Activated CD4-positive, alpha-beta memory T cell treated with anti-CD3 and anti-CD28 coated beads for 36 hours (primary cell): ENCODE measurements at regions of chrX and their contacts with region 1.

Region 1: DNA sequence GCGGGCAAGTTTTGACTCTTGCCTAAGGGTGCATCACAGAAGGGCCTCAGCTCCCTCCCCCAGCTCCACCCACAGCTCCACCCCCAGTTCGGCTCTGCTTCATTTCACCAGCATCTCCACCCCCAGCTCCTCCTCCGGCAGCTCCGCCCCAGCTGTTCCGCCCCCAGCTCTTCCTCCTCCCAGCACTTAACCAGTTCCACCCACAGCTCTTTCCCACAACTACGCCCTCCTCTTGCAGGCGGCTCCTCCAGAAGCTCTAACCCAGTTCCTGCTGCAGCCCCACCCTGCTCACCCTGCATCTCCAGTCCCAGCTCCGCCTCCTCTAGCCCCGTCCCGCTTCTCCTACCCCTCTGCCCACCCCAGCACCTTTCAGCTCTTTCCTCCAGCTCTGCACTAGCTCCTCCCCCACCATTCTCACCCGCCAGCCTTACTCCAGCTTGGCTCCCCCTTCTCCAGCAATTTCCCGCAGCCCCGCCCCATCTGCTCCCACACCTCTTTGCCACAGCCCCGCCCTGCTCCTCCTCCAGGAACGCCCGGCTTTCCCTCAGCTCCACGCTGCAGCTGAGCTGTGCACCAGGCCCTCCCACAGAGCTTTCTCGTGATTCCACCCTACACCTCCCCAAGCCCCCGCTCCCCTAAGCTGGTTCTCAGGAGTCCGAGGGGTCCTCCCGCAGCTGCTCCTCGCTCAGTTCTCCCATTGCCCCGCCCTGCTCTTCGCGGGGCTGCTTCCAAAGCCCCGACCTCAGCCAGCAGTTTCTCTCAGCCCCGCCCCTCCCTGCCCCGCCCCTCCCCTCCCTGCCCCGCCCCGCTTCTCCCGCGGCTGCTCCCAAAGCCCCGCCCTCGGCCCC is 1.3 kb upstream of the EOLA1 start:
- DNase-seq: peak; percentile 93
- H3K4me3 Mint-ChIP-seq: peak overlapping the region; percentile 80
- H3K27ac Mint-ChIP-seq: peak overlapping the region; percentile 85
- H3K4me1 Mint-ChIP-seq: peaks cover 3% of the 10 kb centered on the region
- H3K27me3 Mint-ChIP-seq: no peaks in the 10 kb centered on the region

Region 2: GRCh38 chrX:149504915-149505651 is 34.4 kb before region 1 on chrX and contains the start of gene IDS:
- CTCF ChIA-PET with region 1: interaction called, 16 read pairs
- POLR2A ChIA-PET with region 1: interaction called, 31 read pairs
- intact Hi-C with region 1: loop called (anchors 1 kb)
- DNase-seq: peak; percentile 93
- H3K4me3 Mint-ChIP-seq: peak within 1 kb of the TSS; percentile 97
- H3K27ac Mint-ChIP-seq: peak within 1 kb of the TSS; percentile 99
- H3K4me1 Mint-ChIP-seq: peaks cover 25% of the 10 kb centered on the region
- H3K27me3 Mint-ChIP-seq: no peaks in the 10 kb centered on the region
- total RNA-seq, gene IDS: 71.6 to 72.2 TPM

Region 3: DNA sequence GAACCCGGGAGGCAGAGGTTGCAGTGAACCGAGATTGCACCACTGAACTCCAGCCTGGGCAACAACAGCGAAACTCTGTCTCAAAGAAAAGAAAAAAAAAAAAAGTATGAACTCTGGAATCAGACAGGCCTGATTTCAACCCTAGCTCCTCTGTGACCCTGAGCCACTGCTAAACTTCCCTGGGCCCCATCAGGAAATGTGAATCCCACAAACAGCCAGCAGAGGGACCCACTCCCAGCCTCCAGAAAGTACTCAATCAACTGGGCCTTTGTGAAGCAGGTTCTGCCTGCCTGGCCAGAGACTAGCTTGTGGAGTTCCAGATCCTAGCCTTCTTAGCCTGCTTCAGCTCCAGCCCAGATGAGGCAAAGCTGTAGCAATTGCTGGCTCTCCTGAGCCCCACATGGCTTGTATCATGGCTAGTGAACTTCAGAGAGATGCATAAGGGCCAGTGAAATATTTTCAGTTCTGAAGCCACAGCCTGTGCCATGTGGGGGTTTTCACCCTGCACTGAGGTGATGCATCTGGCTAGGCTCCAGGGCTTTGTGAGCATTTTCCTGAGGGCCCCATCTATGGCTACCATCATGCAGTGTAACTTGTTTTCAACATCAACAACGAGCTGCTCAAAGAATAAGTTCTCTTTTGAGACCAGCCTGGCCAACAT is 27.2 kb before region 1 on chrX:
- CTCF ChIA-PET with region 1: interaction called, 16 read pairs
- POLR2A ChIA-PET with region 1: interaction called, 3 read pairs
- intact Hi-C with region 1: no loop called
- DNase-seq: peak; percentile 70
- H3K4me3 Mint-ChIP-seq: no peak overlapping the region
- H3K27ac Mint-ChIP-seq: peak overlapping the region; percentile 42
- H3K4me1 Mint-ChIP-seq: peaks cover 19% of the 10 kb centered on the region
- H3K27me3 Mint-ChIP-seq: no peaks in the 10 kb centered on the region

Region 4: DNA sequence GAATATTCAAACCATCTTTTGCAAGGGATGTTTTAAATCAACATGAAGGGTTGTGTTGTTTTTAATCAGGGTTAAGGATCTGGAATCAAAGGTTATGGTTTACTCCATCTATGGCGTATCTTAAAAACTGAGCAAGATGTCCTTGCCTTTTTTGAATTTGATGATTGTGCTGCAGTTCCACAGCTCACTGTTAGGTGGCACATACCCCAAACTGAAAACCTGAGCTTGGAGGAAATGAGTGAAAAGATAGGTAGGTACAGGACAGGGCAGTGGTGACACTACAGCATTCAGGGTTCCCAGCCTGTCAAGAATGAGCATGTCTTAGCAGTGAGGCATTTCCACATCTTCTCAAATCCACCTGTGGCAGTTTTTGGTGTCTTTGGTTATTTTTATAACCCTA is 11.8 kb before region 1 on chrX:
- CTCF ChIA-PET with region 1: interaction called, 8 read pairs
- POLR2A ChIA-PET with region 1: interaction called, 3 read pairs
- intact Hi-C with region 1: loop called (anchors 1 kb)
- DNase-seq: peak; percentile 53
- H3K4me3 Mint-ChIP-seq: no peak overlapping the region
- H3K27ac Mint-ChIP-seq: peak overlapping the region; percentile 65
- H3K4me1 Mint-ChIP-seq: peaks cover 37% of the 10 kb centered on the region
- H3K27me3 Mint-ChIP-seq: no peaks in the 10 kb centered on the region

Region 5: GRCh38 chrX:149881081-149881711 is 341.7 kb after region 1 on chrX and contains the start of gene MAGEA8:
- CTCF ChIA-PET with region 1: no interaction called
- POLR2A ChIA-PET with region 1: no interaction called
- intact Hi-C with region 1: no loop called
- DNase-seq: peak; percentile 13
- H3K4me3 Mint-ChIP-seq: no peak within 1 kb of the TSS
- H3K27ac Mint-ChIP-seq: no peak within 1 kb of the TSS
- H3K4me1 Mint-ChIP-seq: no peaks in the 10 kb centered on the region
- H3K27me3 Mint-ChIP-seq: peaks cover 2% of the 10 kb centered on the region
- total RNA-seq, gene MAGEA8: not detected